ENCODE measurements at regions of chr2 and their contacts with region 1.

Region 1: GRCh38 chr2:134918526-134919340 is at the start of gene CCNT2:
- DNase-seq: peak; percentile 99 to 100 (median 100)
- ATAC-seq: peak; percentile 90
- H3K4me3 ChIP-seq: peak within 1 kb of the TSS; percentile 96
- H3K4me3 Mint-ChIP-seq: peak within 1 kb of the TSS; percentile 86 to 98 (median 93)
- H3K27ac ChIP-seq: peak within 1 kb of the TSS; percentile 97
- H3K27ac Mint-ChIP-seq: peak within 1 kb of the TSS; percentile 91 to 99 (median 96)
- H3K4me1 ChIP-seq: peaks cover 31 to 45% of the 10 kb centered on the region in 2 donors
- H3K4me1 Mint-ChIP-seq: peaks cover 18 to 71% (median 48%) of the 10 kb centered on the region in 7 donors
- H3K27me3 ChIP-seq: no peaks in the 10 kb centered on the region
- H3K27me3 Mint-ChIP-seq: peaks cover 0 to 14% (median 0%) of the 10 kb centered on the region in 5 donors
- total RNA-seq, gene CCNT2: 49.8 to 78.1 (median 67.9) TPM

Region 2: GRCh38 chr2:134679745-134680144 is 239.0 kb before region 1 on chr2:
- CTCF ChIA-PET with region 1: no interaction called
- POLR2A ChIA-PET with region 1: interaction called, 3 read pairs
- intact Hi-C with region 1: loop called in 1 of 2 experiments (anchors 2 kb)
- DNase-seq: peak in 7 of 9 donors; percentile 45 to 66 (median 60)
- ATAC-seq: peak; percentile 88
- H3K4me3 ChIP-seq: peak overlapping the region; percentile 42
- H3K4me3 Mint-ChIP-seq: peak overlapping the region; percentile 26 to 81 (median 62)
- H3K27ac ChIP-seq: no peak overlapping the region
- H3K27ac Mint-ChIP-seq: peak overlapping the region in 7 of 9 donors; percentile 13 to 81 (median 38)
- H3K4me1 ChIP-seq: peaks cover 35 to 42% of the 10 kb centered on the region in 2 donors
- H3K4me1 Mint-ChIP-seq: peaks cover 38 to 64% (median 54%) of the 10 kb centered on the region in 7 donors
- H3K27me3 ChIP-seq: no peaks in the 10 kb centered on the region
- H3K27me3 Mint-ChIP-seq: peaks cover 0 to 12% (median 4%) of the 10 kb centered on the region in 5 donors

Region 3: DNA sequence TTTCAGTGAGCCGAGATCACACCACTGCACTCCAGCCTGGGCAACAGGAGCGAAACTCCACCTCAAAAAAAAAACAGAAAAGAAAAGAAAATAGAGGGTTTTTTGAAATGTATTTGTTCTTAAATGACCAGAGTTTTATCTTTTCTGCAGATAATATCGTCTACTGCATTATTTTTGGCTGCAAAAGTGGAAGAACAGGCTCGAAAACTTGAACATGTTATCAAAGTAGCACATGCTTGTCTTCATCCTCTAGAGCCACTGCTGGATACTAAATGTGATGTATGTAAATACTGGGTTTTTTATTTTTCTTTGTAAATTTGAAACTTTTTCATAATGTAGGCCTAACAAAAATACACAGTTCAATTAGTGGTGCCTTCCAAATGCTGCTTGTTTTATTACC is 18.0 kb after region 1 on chr2:
- CTCF ChIA-PET with region 1: no interaction called
- POLR2A ChIA-PET with region 1: no interaction called
- intact Hi-C with region 1: no loop called
- DNase-seq: no peak
- ATAC-seq: no peak
- H3K4me3 ChIP-seq: no peak overlapping the region
- H3K4me3 Mint-ChIP-seq: no peak overlapping the region
- H3K27ac ChIP-seq: no peak overlapping the region
- H3K27ac Mint-ChIP-seq: no peak overlapping the region
- H3K4me1 ChIP-seq: peaks cover 4 to 18% of the 10 kb centered on the region in 2 donors
- H3K4me1 Mint-ChIP-seq: peaks cover 26 to 63% (median 53%) of the 10 kb centered on the region in 7 donors
- H3K27me3 ChIP-seq: no peaks in the 10 kb centered on the region
- H3K27me3 Mint-ChIP-seq: no peaks in the 10 kb centered on the region

Region 4: DNA sequence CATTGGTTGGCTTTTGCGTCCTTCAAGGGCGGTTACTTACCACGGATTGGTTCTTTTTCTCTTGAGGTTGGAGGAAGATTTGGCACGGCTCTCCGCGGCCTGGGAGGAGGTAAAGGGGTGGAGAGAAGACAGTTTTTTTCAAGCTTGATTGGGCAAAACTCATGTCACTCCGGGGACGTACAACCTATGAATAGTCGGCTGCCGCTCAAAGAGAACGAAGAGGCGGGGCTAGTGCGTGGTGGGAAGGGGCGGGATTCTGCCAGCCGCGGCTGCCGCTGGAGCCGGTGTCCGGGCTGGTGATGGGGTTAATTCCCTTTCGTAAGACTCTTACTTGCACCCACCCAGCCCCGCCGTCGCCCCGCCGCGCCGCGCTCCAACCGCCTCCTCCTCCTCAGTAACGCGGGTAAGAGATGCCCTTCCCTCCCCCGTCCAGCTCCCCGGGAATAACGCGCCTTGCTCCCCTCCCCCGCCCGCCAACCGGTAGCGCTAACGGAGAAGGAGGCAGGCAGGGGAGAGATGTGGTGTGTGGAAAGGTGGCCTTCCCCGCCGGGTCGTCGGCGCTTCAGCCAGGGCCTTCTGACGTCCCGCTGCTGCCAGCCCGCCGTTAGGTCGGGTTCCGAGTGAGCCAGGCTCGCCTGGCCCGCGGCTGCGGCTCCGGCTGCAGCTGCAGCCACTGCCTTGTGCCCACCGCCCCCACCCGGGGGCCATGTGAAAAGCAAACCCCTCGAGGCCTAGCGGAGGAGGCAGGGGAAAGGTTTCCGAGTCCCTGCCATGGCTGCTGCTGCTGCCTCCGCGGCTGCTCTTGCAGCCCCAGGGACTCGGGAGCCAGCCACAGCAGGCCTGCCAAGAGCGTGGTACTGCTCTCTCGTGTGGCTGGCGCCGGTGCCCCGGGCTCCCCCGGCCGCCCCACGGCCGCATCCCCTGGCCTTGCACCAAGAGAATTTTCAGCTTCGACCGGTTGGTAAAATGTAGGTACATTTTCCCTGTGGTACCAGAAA is 612.8 kb after region 1 on chr2 and contains the start of gene R3HDM1:
- CTCF ChIA-PET with region 1: no interaction called
- POLR2A ChIA-PET with region 1: interaction called, 18 read pairs
- intact Hi-C with region 1: loop called in 1 of 2 experiments (anchors 1 kb)
- DNase-seq: peak in 8 of 9 donors; percentile 71 to 99 (median 98)
- ATAC-seq: peak; percentile 89
- H3K4me3 ChIP-seq: peak within 1 kb of the TSS; percentile 83
- H3K4me3 Mint-ChIP-seq: no peak within 1 kb of the TSS
- H3K27ac ChIP-seq: peak within 1 kb of the TSS; percentile 84
- H3K27ac Mint-ChIP-seq: peak within 1 kb of the TSS in 7 of 9 donors; percentile 36 to 81 (median 67)
- H3K4me1 ChIP-seq: peaks cover 4 to 21% of the 10 kb centered on the region in 2 donors
- H3K4me1 Mint-ChIP-seq: peaks cover 10 to 39% (median 34%) of the 10 kb centered on the region in 7 donors
- H3K27me3 ChIP-seq: no peaks in the 10 kb centered on the region
- H3K27me3 Mint-ChIP-seq: no peaks in the 10 kb centered on the region
- total RNA-seq, gene R3HDM1: 35.0 to 58.2 (median 47.0) TPM

Region 5: DNA sequence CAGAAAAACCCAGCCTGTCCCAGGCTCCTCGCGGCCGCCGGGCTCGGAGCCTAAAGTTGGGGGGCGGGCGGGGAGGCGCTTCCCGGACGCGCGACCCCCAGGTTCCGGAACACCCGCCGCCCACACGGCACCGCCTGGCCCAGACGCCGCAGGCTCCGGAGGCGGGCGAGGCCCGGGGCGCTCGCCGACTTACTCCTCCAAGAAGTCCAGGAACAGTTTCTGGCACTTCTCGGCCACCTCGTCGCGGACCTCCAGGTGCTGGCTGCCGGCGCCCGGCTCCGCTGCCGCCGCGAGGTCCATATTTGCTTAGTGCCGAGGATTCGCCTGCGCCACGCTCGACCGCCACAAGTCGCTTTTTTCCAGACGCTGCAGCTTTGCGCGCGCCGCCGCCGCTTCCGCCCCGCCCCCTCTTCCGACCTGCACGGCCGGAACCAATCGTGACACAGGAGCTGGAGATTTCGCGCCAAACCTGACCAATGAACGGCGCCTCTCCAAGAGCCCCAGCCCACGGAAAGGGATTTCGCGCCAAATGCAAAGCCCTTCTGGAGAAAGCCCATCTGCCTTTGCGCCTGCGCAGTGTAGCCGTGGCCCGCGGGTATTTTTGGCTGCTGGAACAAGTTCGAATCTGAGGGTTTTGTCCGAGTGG is 957.5 kb after region 1 on chr2 and contains the start of gene MCM6:
- CTCF ChIA-PET with region 1: no interaction called
- POLR2A ChIA-PET with region 1: no interaction called
- intact Hi-C with region 1: loop called (anchors 1 kb)
- DNase-seq: peak; percentile 91 to 99 (median 97)
- ATAC-seq: peak; percentile 96
- H3K4me3 ChIP-seq: peak within 1 kb of the TSS; percentile 83
- H3K4me3 Mint-ChIP-seq: peak within 1 kb of the TSS; percentile 85 to 97 (median 93)
- H3K27ac ChIP-seq: peak within 1 kb of the TSS; percentile 84
- H3K27ac Mint-ChIP-seq: peak within 1 kb of the TSS; percentile 84 to 97 (median 95)
- H3K4me1 ChIP-seq: peaks cover 12 to 18% of the 10 kb centered on the region in 2 donors
- H3K4me1 Mint-ChIP-seq: peaks cover 23 to 44% (median 41%) of the 10 kb centered on the region in 7 donors
- H3K27me3 ChIP-seq: no peaks in the 10 kb centered on the region
- H3K27me3 Mint-ChIP-seq: peaks cover 0 to 5% (median 0%) of the 10 kb centered on the region in 5 donors
- total RNA-seq, gene MCM6: 12.1 to 105 (median 21.6) TPM

Region 6: GRCh38 chr2:136059036-136059472 is 1140.3 kb after region 1 on chr2:
- CTCF ChIA-PET with region 1: no interaction called
- POLR2A ChIA-PET with region 1: no interaction called
- intact Hi-C with region 1: loop called (anchors 5 to 10 kb)
- DNase-seq: no peak
- ATAC-seq: no peak
- H3K4me3 ChIP-seq: no peak overlapping the region
- H3K4me3 Mint-ChIP-seq: peak overlapping the region in 2 of 10 donors; percentile 43 to 50
- H3K27ac ChIP-seq: no peak overlapping the region
- H3K27ac Mint-ChIP-seq: peak overlapping the region in 5 of 9 donors; percentile 16 to 90 (median 65)
- H3K4me1 ChIP-seq: peaks cover 43 to 44% of the 10 kb centered on the region in 2 donors
- H3K4me1 Mint-ChIP-seq: peaks cover 46 to 90% (median 80%) of the 10 kb centered on the region in 7 donors
- H3K27me3 ChIP-seq: no peaks in the 10 kb centered on the region
- H3K27me3 Mint-ChIP-seq: no peaks in the 10 kb centered on the region